ENCODE measurements at regions of chr10 and their contacts with region 1.

Region 1: GRCh38 chr10:46284293-46285229 is 2.2 kb upstream of the ANTXRL start:
- DNase-seq: peak; percentile 84
- ATAC-seq: peak; percentile 88
- H3K4me3 Mint-ChIP-seq: peak overlapping the region; percentile 78
- H3K27ac Mint-ChIP-seq: peak overlapping the region; percentile 87
- H3K4me1 Mint-ChIP-seq: peaks cover 34% of the 10 kb centered on the region
- H3K27me3 Mint-ChIP-seq: peaks cover 21% of the 10 kb centered on the region

Region 2: DNA sequence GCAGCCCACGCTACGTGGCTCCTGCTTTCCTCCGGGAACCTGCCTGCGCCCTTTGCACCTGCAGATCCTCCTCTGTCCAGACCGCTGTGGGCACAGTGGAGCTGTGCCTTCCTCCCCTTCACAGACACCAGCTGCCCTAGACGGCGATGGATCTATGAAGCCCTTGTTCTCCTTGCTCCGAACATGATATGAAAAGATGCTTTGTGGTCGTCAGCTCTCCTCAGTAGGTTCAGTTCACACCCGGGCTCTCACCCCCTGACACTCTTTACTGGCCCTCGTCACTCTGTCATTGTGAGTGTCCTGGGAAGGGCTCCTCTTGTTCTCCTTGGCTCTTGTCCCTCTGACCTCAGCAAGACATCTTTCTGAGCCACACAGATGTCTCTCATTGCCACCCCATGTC is 1095.3 kb after region 1 on chr10:
- CTCF ChIA-PET with region 1: interaction called, 11 read pairs
- POLR2A ChIA-PET with region 1: interaction called, 7 read pairs
- DNase-seq: no peak
- ATAC-seq: no peak
- H3K4me3 Mint-ChIP-seq: no peak overlapping the region
- H3K27ac Mint-ChIP-seq: no peak overlapping the region
- H3K4me1 Mint-ChIP-seq: peaks cover 31% of the 10 kb centered on the region
- H3K27me3 Mint-ChIP-seq: peaks cover 46% of the 10 kb centered on the region